B cell (primary cell): ENCODE measurements at regions of chr3 and their contacts with region 1.

Region 1: GRCh38 chr3:72665701-72666443 is 182.4 kb downstream of the SHQ1 start:
- DNase-seq: peak; percentile 59
- ATAC-seq: peak; percentile 39
- H3K4me3 ChIP-seq: no peak overlapping the region
- H3K4me3 Mint-ChIP-seq: no peak overlapping the region
- H3K27ac ChIP-seq: no peak overlapping the region
- H3K27ac Mint-ChIP-seq: no peak overlapping the region
- H3K4me1 ChIP-seq: no peaks in the 10 kb centered on the region
- H3K4me1 Mint-ChIP-seq: no peaks in the 10 kb centered on the region
- H3K27me3 ChIP-seq: peaks cover 0 to 13% (median 0%) of the 10 kb centered on the region in 4 experiments
- H3K27me3 Mint-ChIP-seq: peaks cover 16% of the 10 kb centered on the region
- CTCF ChIP-seq: peak; percentile 70

Region 2: GRCh38 chr3:71955240-71956068 is 710.4 kb before region 1 on chr3:
- CTCF ChIA-PET with region 1: interaction called, 10 read pairs
- POLR2A ChIA-PET with region 1: no interaction called
- intact Hi-C with region 1: no loop called
- DNase-seq: peak; percentile 51
- ATAC-seq: peak; percentile 21
- H3K4me3 ChIP-seq: no peak overlapping the region
- H3K4me3 Mint-ChIP-seq: no peak overlapping the region
- H3K27ac ChIP-seq: no peak overlapping the region
- H3K27ac Mint-ChIP-seq: no peak overlapping the region
- H3K4me1 ChIP-seq: peaks cover 7 to 11% of the 10 kb centered on the region in 2 donors
- H3K4me1 Mint-ChIP-seq: peaks cover 10% of the 10 kb centered on the region
- H3K27me3 ChIP-seq: peaks cover 0 to 21% (median 5%) of the 10 kb centered on the region in 4 experiments
- H3K27me3 Mint-ChIP-seq: peaks cover 6% of the 10 kb centered on the region
- CTCF ChIP-seq: no peak

Region 3: DNA sequence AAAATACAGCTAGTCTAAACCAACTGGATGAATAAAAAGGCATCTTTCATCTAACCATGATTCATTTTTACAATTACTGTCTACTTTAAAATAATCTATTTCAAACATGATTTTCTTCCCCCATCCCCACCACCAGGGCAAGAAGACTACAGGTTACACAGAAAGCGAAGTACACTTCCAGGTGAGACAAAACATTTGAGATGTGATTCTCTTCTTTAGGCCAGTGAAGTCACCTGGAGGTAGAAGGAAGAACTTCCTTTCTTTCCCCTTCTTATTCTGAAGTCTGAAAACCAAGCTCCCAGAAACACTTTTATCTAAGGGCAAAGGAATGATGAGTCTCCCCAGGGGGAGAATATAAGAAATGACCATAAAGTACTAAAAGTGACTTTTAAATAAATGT is 145.7 kb after region 1 on chr3:
- CTCF ChIA-PET with region 1: interaction called, 11 read pairs
- POLR2A ChIA-PET with region 1: no interaction called
- intact Hi-C with region 1: no loop called
- DNase-seq: no peak
- ATAC-seq: no peak
- H3K4me3 ChIP-seq: no peak overlapping the region
- H3K4me3 Mint-ChIP-seq: no peak overlapping the region
- H3K27ac ChIP-seq: no peak overlapping the region
- H3K27ac Mint-ChIP-seq: no peak overlapping the region
- H3K4me1 ChIP-seq: peaks cover 0 to 2% of the 10 kb centered on the region in 2 donors
- H3K4me1 Mint-ChIP-seq: peaks cover 11% of the 10 kb centered on the region
- H3K27me3 ChIP-seq: no peaks in the 10 kb centered on the region
- H3K27me3 Mint-ChIP-seq: no peaks in the 10 kb centered on the region
- CTCF ChIP-seq: no peak